ENCODE measurements at regions of chr12 and their contacts with region 1.

Region 1: GRCh38 chr12:22759769-22760674 is 135.1 kb downstream of the ETNK1 start:
- DNase-seq: peak in 1 of 2 donors; percentile 78
- H3K4me3 ChIP-seq: peak overlapping the region in 1 of 2 donors; percentile 42
- H3K27ac ChIP-seq: peak overlapping the region; percentile 90 to 93
- H3K4me1 ChIP-seq: peaks cover 3 to 8% of the 10 kb centered on the region in 2 donors
- H3K27me3 ChIP-seq: no peaks in the 10 kb centered on the region
- CTCF ChIP-seq: no peak

Region 2: GRCh38 chr12:22787557-22787956 is 27.5 kb after region 1 on chr12:
- intact Hi-C with region 1: loop called (anchors 1 kb)
- DNase-seq: peak in 1 of 2 donors; percentile 85
- H3K4me3 ChIP-seq: peak overlapping the region; percentile 7 to 34
- H3K27ac ChIP-seq: peak overlapping the region; percentile 63 to 86
- H3K4me1 ChIP-seq: peaks cover 0 to 29% of the 10 kb centered on the region in 2 donors
- H3K27me3 ChIP-seq: no peaks in the 10 kb centered on the region
- CTCF ChIP-seq: no peak

Region 3: GRCh38 chr12:23028158-23028802 is 268.3 kb after region 1 on chr12:
- intact Hi-C with region 1: no loop called
- DNase-seq: no peak
- H3K4me3 ChIP-seq: no peak overlapping the region
- H3K27ac ChIP-seq: no peak overlapping the region
- H3K4me1 ChIP-seq: no peaks in the 10 kb centered on the region
- H3K27me3 ChIP-seq: no peaks in the 10 kb centered on the region
- CTCF ChIP-seq: no peak